A549 (cell line): ENCODE measurements at regions of chr11 and their contacts with region 1.

Region 1: GRCh38 chr11:14773755-14774154 is 118.3 kb downstream of the CYP2R1 start:
- DNase-seq: peak in 1 of 2 experiments; percentile 27
- ATAC-seq: peak; percentile 56 to 76; a peak in 4 of 6 replicates
- H3K4me3 ChIP-seq: no peak overlapping the region
- H3K27ac ChIP-seq: peak overlapping the region in 1 of 2 experiments; percentile 1; a peak in 1 of 6 replicates
- H3K4me1 ChIP-seq: 0 out of 3 replicates have a peak, but pooled peaks cover 4% of the 10 kb centered on the region
- CTCF ChIP-seq: no peak
- EP300 ChIP-seq: no peak
- POLR2A ChIP-seq: no peak
- RAD21 ChIP-seq: no peak

Region 2: GRCh38 chr11:14789879-14790484 is 16.2 kb after region 1 on chr11:
- CTCF ChIA-PET with region 1: interaction called, 11 read pairs
- POLR2A ChIA-PET with region 1: no interaction called
- DNase-seq: peak in 1 of 2 experiments; percentile 10
- ATAC-seq: peak in 1 of 2 experiments; percentile 45; a peak in 1 of 6 replicates
- H3K4me3 ChIP-seq: no peak overlapping the region
- H3K27ac ChIP-seq: no peak overlapping the region
- H3K4me1 ChIP-seq: no peaks in the 10 kb centered on the region
- CTCF ChIP-seq: peak; percentile 68
- EP300 ChIP-seq: no peak
- POLR2A ChIP-seq: no peak
- RAD21 ChIP-seq: peak; percentile 67 to 73